ENCODE measurements at regions of chr19 and their contacts with region 1.

Region 1: GRCh38 chr19:43651758-43652545 is 12.3 kb upstream of the CADM4 start:
- H3K4me3 ChIP-seq: no peak overlapping the region
- H3K27ac ChIP-seq: 0 out of 2 replicates have a peak overlapping the region, but pooled peaks have one; percentile 1
- H3K4me1 ChIP-seq: peaks cover 3% of the 10 kb centered on the region
- CTCF ChIP-seq: peak; percentile 94

Region 2: GRCh38 chr19:43532962-43533545 is 118.9 kb before region 1 on chr19 and contains the start of gene ZNF575:
- CTCF ChIA-PET with region 1: interaction called, 19 read pairs
- POLR2A ChIA-PET with region 1: no interaction called
- H3K4me3 ChIP-seq: peak within 1 kb of the TSS; percentile 9
- H3K27ac ChIP-seq: peak within 1 kb of the TSS; percentile 73
- H3K4me1 ChIP-seq: peaks cover 26% of the 10 kb centered on the region
- CTCF ChIP-seq: no peak; the same call in 1 of the 2 replicates

Region 3: GRCh38 chr19:43639519-43640423 is 12.2 kb before region 1 on chr19 and contains the start of gene CADM4:
- CTCF ChIA-PET with region 1: interaction called, 27 read pairs
- POLR2A ChIA-PET with region 1: interaction called, 6 read pairs
- H3K4me3 ChIP-seq: peak within 1 kb of the TSS; percentile 48
- H3K27ac ChIP-seq: peak within 1 kb of the TSS; percentile 49; the same call in 1 of the 2 replicates
- H3K4me1 ChIP-seq: peaks cover 21% of the 10 kb centered on the region
- CTCF ChIP-seq: peak; percentile 61

Region 4: DNA sequence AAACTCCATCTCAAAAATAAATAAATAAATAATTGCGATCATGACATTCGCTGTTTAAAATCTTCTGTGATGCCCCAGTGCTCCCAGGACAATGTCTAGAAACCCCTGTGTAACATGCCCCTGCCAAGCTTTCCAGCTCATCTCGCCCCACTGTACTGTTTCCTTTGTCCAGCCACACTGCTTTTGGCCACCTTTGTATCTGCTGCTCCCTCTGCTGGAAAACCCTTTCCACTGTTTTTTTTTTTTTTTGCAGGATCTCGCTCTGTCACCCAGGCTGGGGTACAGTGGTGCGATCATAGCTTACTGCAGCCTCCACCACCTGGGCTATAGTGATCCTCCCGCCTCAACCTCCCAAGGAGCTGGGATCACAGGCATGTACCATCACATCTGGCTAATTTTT is 10.5 kb after region 1 on chr19:
- CTCF ChIA-PET with region 1: interaction called, 52 read pairs
- POLR2A ChIA-PET with region 1: interaction called, 14 read pairs
- H3K4me3 ChIP-seq: no peak overlapping the region
- H3K27ac ChIP-seq: no peak overlapping the region
- H3K4me1 ChIP-seq: peaks cover 1% of the 10 kb centered on the region
- CTCF ChIP-seq: peak; percentile 72

Region 5: DNA sequence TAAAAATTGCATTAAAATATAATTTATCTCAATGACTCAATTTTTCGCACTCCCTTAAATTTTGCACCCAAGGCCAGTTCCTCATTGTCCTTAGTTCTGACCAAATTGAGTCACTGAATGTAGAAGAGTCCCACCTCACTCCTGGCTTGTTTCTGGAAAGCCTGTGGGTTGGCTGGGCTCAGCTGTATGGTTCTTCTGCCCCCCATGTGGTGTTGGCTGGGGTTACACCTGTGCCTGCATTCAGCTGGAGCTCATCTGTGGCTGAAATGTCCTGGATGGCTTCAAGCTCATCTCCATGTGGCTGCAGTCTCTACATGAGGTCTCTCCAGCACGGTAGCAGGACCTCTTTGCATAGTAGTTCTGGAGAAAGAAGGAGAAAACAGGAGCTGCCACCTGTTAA is 56.8 kb after region 1 on chr19:
- CTCF ChIA-PET with region 1: no interaction called
- POLR2A ChIA-PET with region 1: no interaction called
- H3K4me3 ChIP-seq: no peak overlapping the region
- H3K27ac ChIP-seq: no peak overlapping the region
- H3K4me1 ChIP-seq: no peaks in the 10 kb centered on the region; the same call in 1 of the 2 replicates
- CTCF ChIP-seq: no peak